WTC11 (cell line): ENCODE measurements at regions of chr10 and their contacts with region 1.

Region 1: GRCh38 chr10:58384999-58385783 is at the start of gene TFAM:
- DNase-seq: peak; percentile 97
- ATAC-seq: peak; percentile 96
- H3K4me3 Mint-ChIP-seq: peak within 1 kb of the TSS; percentile 93
- H3K27ac Mint-ChIP-seq: peak within 1 kb of the TSS; percentile 94
- H3K4me1 Mint-ChIP-seq: peaks cover 15% of the 10 kb centered on the region
- H3K27me3 Mint-ChIP-seq: no peaks in the 10 kb centered on the region
- CTCF ChIP-seq: no peak
- total RNA-seq, gene TFAM: 74.4 to 77.4 TPM (median 76.1 TPM) in 3 replicates

Region 2: DNA sequence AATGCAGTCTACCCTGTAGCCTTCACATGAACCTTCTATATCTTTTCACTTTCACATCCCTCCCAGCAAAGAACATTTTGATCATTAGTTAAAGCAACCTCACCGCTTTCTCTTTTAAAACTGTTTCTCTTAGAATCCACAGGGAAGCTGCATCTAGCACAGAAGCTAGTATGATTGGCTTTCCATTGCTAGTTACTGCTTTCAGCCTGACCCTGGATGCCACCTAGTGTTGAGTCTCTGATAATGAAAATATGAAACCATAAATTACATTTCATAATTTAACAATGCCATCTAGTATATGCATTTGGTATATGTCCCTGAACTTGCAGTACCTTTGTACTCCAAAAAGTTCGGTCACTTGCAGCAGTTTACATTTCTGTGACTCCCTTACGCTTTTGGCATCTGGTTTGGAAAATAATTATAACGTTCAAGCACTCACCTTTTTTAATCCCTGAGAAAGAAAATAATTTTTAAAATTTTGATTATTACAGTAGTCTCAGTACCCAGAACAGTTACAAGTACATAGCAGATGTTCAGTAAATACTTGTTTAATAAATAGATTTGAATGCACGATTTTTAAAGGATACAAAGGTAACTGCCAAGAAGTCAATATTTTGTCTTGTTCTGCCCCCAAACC is 93.5 kb before region 1 on chr10:
- CTCF ChIA-PET with region 1: interaction called, 16 read pairs
- POLR2A ChIA-PET with region 1: no interaction called
- DNase-seq: no peak
- ATAC-seq: peak; percentile 41; the same call in 1 of the 2 replicates
- H3K4me3 Mint-ChIP-seq: no peak overlapping the region
- H3K27ac Mint-ChIP-seq: no peak overlapping the region
- H3K4me1 Mint-ChIP-seq: peaks cover 12% of the 10 kb centered on the region
- H3K27me3 Mint-ChIP-seq: no peaks in the 10 kb centered on the region
- CTCF ChIP-seq: no peak

Region 3: GRCh38 chr10:58299580-58299979 is 85.6 kb before region 1 on chr10:
- CTCF ChIA-PET with region 1: interaction called, 24 read pairs
- POLR2A ChIA-PET with region 1: no interaction called
- DNase-seq: peak; percentile 72
- ATAC-seq: peak; percentile 96
- H3K4me3 Mint-ChIP-seq: no peak overlapping the region; the same call in 1 of the 2 replicates
- H3K27ac Mint-ChIP-seq: no peak overlapping the region
- H3K4me1 Mint-ChIP-seq: peaks cover 18% of the 10 kb centered on the region
- H3K27me3 Mint-ChIP-seq: no peaks in the 10 kb centered on the region
- CTCF ChIP-seq: peak; percentile 66

Region 4: GRCh38 chr10:58334817-58335305 is 50.3 kb before region 1 on chr10 and contains the start of gene UBE2D1:
- CTCF ChIA-PET with region 1: interaction called, 7 read pairs
- POLR2A ChIA-PET with region 1: interaction called, 10 read pairs
- DNase-seq: peak; percentile 93
- ATAC-seq: peak; percentile 97
- H3K4me3 Mint-ChIP-seq: peak within 1 kb of the TSS; percentile 96
- H3K27ac Mint-ChIP-seq: peak within 1 kb of the TSS; percentile 64; the same call in 1 of the 2 replicates
- H3K4me1 Mint-ChIP-seq: peaks cover 19% of the 10 kb centered on the region
- H3K27me3 Mint-ChIP-seq: no peaks in the 10 kb centered on the region
- CTCF ChIP-seq: no peak
- total RNA-seq, gene UBE2D1: 23.7 to 24.6 TPM (median 23.8 TPM) in 3 replicates

Region 5: GRCh38 chr10:58502956-58503355 is 117.8 kb after region 1 on chr10:
- CTCF ChIA-PET with region 1: no interaction called
- POLR2A ChIA-PET with region 1: no interaction called
- DNase-seq: no peak
- ATAC-seq: no peak
- H3K4me3 Mint-ChIP-seq: no peak overlapping the region
- H3K27ac Mint-ChIP-seq: no peak overlapping the region
- H3K4me1 Mint-ChIP-seq: peaks cover 7% of the 10 kb centered on the region
- H3K27me3 Mint-ChIP-seq: no peaks in the 10 kb centered on the region
- CTCF ChIP-seq: no peak